CD4-positive, alpha-beta memory T cell (primary cell): ENCODE measurements at regions of chr2 and their contacts with region 1.

Region 1: DNA sequence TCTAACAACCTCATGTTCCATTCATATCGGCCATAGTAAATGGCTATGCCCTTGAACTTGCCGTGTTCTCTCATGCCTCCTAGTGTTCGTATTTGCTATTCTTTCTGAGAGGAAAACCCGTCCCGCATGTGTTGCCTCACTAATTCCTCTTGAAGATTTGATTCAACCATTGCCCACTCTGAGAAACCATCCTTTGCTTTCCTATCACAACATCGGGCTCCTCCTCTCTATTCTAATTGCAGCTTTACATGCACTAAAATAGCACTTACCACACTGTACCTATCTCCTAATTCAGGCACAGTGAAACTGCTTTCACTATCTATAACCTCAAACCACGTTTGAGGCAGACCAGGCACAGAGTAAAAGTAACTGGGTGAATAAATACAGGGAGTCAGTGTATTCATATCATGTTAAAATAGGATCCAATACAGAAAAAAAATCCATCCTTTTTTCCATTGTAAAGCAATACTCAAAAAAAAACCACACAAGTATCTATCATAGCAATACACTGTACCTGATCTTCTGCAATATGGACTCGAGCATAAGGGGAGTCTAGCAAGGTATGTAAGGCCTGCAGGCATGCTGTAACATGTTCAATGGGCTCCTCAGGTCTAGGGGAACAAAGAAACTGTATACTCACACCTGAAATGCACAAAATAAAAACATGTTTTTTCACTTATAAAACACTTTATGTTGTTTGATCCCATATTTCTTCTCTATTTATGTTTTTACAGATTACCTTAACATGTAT is 39.0 kb upstream of the STRN start:
- DNase-seq: peak; percentile 9 to 43 (median 18)
- H3K4me3 ChIP-seq: no peak overlapping the region
- H3K4me3 Mint-ChIP-seq: peak overlapping the region in 5 of 8 donors; percentile 9 to 76 (median 57)
- H3K27ac ChIP-seq: no peak overlapping the region
- H3K27ac Mint-ChIP-seq: peak overlapping the region; percentile 5 to 80 (median 62)
- H3K4me1 ChIP-seq: no peaks in the 10 kb centered on the region
- H3K4me1 Mint-ChIP-seq: peaks cover 0 to 10% (median 7%) of the 10 kb centered on the region in 4 donors
- H3K27me3 ChIP-seq: no peaks in the 10 kb centered on the region
- H3K27me3 Mint-ChIP-seq: no peaks in the 10 kb centered on the region

Region 2: DNA sequence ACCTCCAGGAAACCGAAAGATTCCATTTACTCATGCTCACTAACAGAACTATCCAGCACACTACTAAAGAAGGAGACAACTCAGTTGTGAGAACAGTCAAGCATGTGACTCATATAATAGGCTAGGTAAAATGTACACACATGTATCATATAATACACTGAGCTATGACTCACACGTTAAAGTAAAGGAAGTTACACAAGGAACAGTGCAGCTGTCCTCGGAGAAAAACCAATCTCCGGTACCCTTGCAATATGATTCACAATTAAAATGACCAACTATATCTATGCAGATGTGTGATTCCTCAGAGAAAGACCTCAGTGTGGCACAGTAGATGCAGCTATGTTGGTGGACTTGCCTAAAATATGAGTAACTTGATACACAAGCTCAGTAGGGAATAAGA is 115.5 kb before region 1 on chr2:
- CTCF ChIA-PET with region 1: no interaction called
- POLR2A ChIA-PET with region 1: no interaction called
- intact Hi-C with region 1: loop called (anchors 10 kb)
- DNase-seq: no peak
- H3K4me3 ChIP-seq: no peak overlapping the region
- H3K4me3 Mint-ChIP-seq: no peak overlapping the region
- H3K27ac ChIP-seq: no peak overlapping the region
- H3K27ac Mint-ChIP-seq: peak overlapping the region in 1 of 7 donors; percentile 22
- H3K4me1 ChIP-seq: no peaks in the 10 kb centered on the region
- H3K4me1 Mint-ChIP-seq: peaks cover 0 to 6% (median under 1%) of the 10 kb centered on the region in 4 donors
- H3K27me3 ChIP-seq: no peaks in the 10 kb centered on the region
- H3K27me3 Mint-ChIP-seq: no peaks in the 10 kb centered on the region